GM10248 (cell line): ENCODE measurements at regions of chr20 and their contacts with region 1.

Region 1: DNA sequence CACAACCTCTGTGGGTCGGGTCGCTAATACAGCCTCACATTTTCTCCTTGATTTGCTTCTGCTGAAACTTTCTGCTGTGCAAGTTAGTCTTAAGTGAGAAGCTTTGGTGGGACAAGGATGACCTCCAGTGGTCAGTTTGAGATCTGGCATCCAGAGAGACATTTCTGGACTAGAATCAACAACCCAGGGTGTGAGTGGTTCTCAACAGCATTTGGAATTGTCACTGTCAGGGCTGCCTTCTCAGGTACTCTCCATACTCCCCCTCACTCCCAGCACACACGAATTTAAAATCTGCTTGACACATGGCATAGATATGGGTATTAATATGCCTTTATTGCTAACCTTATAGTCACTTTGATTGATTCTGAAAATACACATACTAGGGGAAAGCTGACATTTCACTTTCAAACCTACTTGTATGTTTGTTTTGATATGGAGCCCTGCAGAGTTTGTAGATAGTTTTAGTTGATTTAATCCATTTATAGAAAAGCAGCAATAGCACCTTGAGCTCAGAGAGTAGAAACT is 13.2 kb downstream of the OTOR start:
- DNase-seq: peak; percentile 45
- CTCF ChIP-seq: peak; percentile 78

Region 2: DNA sequence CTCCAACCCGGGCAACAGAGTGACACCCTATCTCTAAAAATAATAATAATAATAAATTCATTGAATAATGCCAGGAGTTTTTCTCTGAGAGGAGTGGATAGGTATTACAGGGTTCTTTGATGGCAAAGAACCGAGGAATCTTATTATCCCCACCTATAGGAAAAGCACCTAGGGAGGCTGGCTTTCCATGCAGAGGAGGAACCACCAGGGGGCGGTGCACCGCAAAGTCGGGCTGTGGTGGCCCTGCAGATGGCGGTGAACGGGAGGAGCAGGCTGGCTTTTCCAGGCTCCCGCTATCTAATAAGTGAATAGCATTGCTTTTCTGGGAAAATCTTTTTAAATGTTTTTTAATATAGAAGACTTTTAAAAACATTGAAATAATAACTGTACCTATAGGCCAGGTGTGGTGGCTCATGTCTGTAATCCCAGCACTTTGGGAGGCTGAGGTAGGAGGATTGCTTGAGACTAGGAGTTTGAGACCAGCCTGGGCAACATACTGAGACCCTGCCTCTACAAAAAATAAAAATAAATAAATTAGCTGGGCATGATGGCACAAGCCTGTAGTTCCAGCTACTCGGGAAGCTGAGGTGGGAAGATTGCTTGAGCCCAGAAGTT is 1052.3 kb before region 1 on chr20:
- CTCF ChIA-PET with region 1: interaction called, 12 read pairs
- POLR2A ChIA-PET with region 1: no interaction called
- DNase-seq: peak; percentile 64
- CTCF ChIP-seq: peak; percentile 71

Region 3: GRCh38 chr20:16517946-16518783 is 243.2 kb before region 1 on chr20:
- CTCF ChIA-PET with region 1: interaction called, 44 read pairs
- POLR2A ChIA-PET with region 1: no interaction called
- DNase-seq: peak; percentile 50
- CTCF ChIP-seq: peak; percentile 36

Region 4: GRCh38 chr20:16699293-16699692 is 62.1 kb before region 1 on chr20:
- CTCF ChIA-PET with region 1: interaction called, 10 read pairs
- POLR2A ChIA-PET with region 1: no interaction called
- DNase-seq: no peak
- CTCF ChIP-seq: no peak

Region 5: GRCh38 chr20:17189976-17190695 is 428.8 kb after region 1 on chr20:
- CTCF ChIA-PET with region 1: no interaction called
- POLR2A ChIA-PET with region 1: no interaction called
- DNase-seq: no peak
- CTCF ChIP-seq: no peak